ENCODE measurements at regions of chr2 and their contacts with region 1.

Region 1: DNA sequence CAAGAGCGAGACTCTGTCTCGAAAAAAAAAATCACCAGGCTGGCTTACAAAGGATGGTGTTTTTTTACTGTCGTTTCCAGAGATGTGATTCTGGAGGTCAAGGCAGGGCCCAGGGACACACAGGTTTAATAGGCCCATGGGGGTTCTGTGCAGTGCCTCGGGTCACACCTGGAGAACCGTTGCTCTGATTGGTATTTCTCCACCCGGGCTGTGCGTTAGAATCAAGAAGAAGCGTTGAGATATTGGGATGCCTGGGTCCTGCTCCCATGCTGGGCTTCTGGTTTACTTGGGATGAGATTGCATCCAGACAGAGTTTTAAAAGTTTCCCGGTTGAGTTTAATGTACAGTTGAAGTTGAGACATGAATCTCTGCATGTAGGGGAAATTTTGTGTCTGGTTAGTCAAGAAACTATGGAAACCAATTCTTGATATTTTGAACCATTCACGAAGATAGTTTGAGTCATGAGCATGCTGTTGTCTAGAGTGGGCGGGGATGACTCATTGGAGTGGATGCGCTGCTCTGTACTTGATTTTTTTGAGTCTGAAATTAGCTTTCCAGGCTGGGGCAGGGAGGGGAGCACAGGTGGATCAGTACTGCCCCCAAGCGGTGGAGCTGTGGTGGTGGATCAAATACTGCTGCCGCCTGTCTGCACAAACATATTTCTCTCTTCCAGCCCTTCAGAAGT is 50.1 kb downstream of the GREB1 start:
- DNase-seq: peak; percentile 89
- H3K4me3 ChIP-seq: no peak overlapping the region
- H3K27ac ChIP-seq: peak overlapping the region; percentile 72 to 77
- H3K4me1 ChIP-seq: peaks cover 27% of the 10 kb centered on the region
- H3K27me3 ChIP-seq: no peaks in the 10 kb centered on the region
- CTCF ChIP-seq: peak; percentile 81 to 97 (median 91)
- POLR2A ChIP-seq: no peak

Region 2: GRCh38 chr2:11477994-11478393 is 106.0 kb before region 1 on chr2:
- intact Hi-C with region 1: loop called (anchors 5 kb)
- DNase-seq: peak; percentile 98
- H3K4me3 ChIP-seq: no peak overlapping the region
- H3K27ac ChIP-seq: no peak overlapping the region
- H3K4me1 ChIP-seq: peaks cover 9% of the 10 kb centered on the region
- H3K27me3 ChIP-seq: no peaks in the 10 kb centered on the region
- CTCF ChIP-seq: peak; percentile 96 to 98 (median 98)
- POLR2A ChIP-seq: no peak

Measured in testis (tissue), 5 donors.